Calu3 (cell line): ENCODE measurements at regions of chr9 and their contacts with region 1.

Region 1: GRCh38 chr9:73269430-73270101 is 117.9 kb downstream of the ANXA1 start:
- DNase-seq: no peak
- H3K4me3 Mint-ChIP-seq: no peak overlapping the region
- H3K27ac Mint-ChIP-seq: peak overlapping the region; percentile 23
- H3K4me1 Mint-ChIP-seq: peaks cover 22% of the 10 kb centered on the region
- H3K27me3 Mint-ChIP-seq: no peaks in the 10 kb centered on the region
- CTCF ChIP-seq: no peak

Region 2: GRCh38 chr9:72912476-72913381 is 356.8 kb before region 1 on chr9:
- CTCF ChIA-PET with region 1: no interaction called
- intact Hi-C with region 1: no loop called
- DNase-seq: no peak
- H3K4me3 Mint-ChIP-seq: no peak overlapping the region
- H3K27ac Mint-ChIP-seq: no peak overlapping the region
- H3K4me1 Mint-ChIP-seq: no peaks in the 10 kb centered on the region
- H3K27me3 Mint-ChIP-seq: no peaks in the 10 kb centered on the region
- CTCF ChIP-seq: no peak

Region 3: GRCh38 chr9:73327149-73327548 is 57.6 kb after region 1 on chr9:
- CTCF ChIA-PET with region 1: no interaction called
- intact Hi-C with region 1: loop called (anchors 10 kb)
- DNase-seq: no peak
- H3K4me3 Mint-ChIP-seq: no peak overlapping the region
- H3K27ac Mint-ChIP-seq: no peak overlapping the region
- H3K4me1 Mint-ChIP-seq: no peaks in the 10 kb centered on the region
- H3K27me3 Mint-ChIP-seq: no peaks in the 10 kb centered on the region
- CTCF ChIP-seq: no peak

Region 4: DNA sequence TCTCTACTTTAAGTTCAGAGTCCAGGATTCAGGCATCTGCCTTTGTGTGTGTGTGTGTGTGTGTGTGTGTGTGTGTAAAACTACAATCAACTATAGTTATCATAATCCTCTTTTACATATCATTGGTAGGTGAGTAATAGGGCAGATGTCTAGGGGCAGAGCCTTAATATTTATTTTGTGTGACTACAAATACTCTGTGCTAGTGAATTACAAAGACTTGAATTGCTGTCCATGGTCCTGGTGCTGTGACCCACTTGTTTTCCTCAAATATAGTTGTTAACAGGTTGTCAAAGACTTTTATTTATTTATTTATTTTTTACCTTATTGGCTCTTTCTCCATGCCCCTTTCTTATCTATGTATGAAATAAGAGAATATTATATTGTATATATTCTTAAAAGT is 78.9 kb after region 1 on chr9:
- CTCF ChIA-PET with region 1: no interaction called
- intact Hi-C with region 1: loop called (anchors 5 kb)
- DNase-seq: no peak
- H3K4me3 Mint-ChIP-seq: no peak overlapping the region
- H3K27ac Mint-ChIP-seq: no peak overlapping the region
- H3K4me1 Mint-ChIP-seq: peaks cover 9% of the 10 kb centered on the region
- H3K27me3 Mint-ChIP-seq: no peaks in the 10 kb centered on the region
- CTCF ChIP-seq: no peak

Region 5: GRCh38 chr9:73565833-73566465 is 296.4 kb after region 1 on chr9:
- CTCF ChIA-PET with region 1: interaction called, 17 read pairs
- intact Hi-C with region 1: loop called (anchors 1 kb)
- DNase-seq: peak; percentile 41
- H3K4me3 Mint-ChIP-seq: no peak overlapping the region
- H3K27ac Mint-ChIP-seq: no peak overlapping the region
- H3K4me1 Mint-ChIP-seq: no peaks in the 10 kb centered on the region
- H3K27me3 Mint-ChIP-seq: no peaks in the 10 kb centered on the region
- CTCF ChIP-seq: no peak

Region 6: DNA sequence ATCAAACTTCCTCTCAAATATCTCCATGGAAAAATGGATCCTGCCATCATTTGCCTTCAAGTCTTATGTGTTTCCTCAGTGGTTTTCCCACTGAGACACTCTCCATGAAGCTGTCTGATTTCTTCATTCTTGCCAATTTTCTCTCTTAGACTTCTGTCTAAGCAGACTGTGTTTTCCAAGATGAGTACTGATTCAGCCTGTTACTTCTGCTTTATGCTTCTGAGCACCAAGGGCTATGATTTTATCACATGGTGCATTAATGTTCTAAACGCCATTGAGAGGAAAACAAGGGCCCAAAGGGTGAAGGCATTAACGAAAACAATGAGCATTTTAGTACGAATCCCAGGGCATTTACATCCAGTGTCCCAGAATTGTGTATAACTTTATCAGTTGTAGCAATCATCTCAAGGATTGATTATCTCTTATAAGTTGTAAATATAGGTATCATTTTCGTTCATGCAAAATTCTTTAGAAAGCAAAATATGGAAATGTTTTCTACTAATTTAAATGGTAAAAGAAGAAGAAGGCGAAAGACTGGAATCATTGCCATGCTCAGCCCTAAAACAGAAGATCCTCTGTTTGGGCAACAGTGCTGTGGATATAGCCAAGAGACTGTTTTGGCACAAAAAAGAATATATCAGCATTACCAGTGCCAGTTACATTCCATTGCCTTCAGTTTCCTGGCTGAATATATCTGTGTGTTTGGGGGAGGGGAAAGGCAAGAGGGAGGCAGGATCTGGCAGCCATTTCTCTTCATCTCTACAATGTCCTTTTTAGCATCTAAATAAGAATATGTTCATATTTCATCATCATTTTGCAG is 419.7 kb after region 1 on chr9:
- CTCF ChIA-PET with region 1: no interaction called
- intact Hi-C with region 1: no loop called
- DNase-seq: no peak
- H3K4me3 Mint-ChIP-seq: no peak overlapping the region
- H3K27ac Mint-ChIP-seq: no peak overlapping the region
- H3K4me1 Mint-ChIP-seq: peaks cover under 1% of the 10 kb centered on the region
- H3K27me3 Mint-ChIP-seq: no peaks in the 10 kb centered on the region
- CTCF ChIP-seq: no peak

Region 7: GRCh38 chr9:74379718-74380117 is 1110.2 kb after region 1 on chr9:
- CTCF ChIA-PET with region 1: no interaction called
- intact Hi-C with region 1: loop called (anchors 10 kb)
- DNase-seq: peak; percentile 55
- H3K4me3 Mint-ChIP-seq: no peak overlapping the region
- H3K27ac Mint-ChIP-seq: no peak overlapping the region
- H3K4me1 Mint-ChIP-seq: no peaks in the 10 kb centered on the region
- H3K27me3 Mint-ChIP-seq: no peaks in the 10 kb centered on the region
- CTCF ChIP-seq: no peak